SK-N-SH (cell line): ENCODE measurements at regions of chr14 and their contacts with region 1.

Region 1: GRCh38 chr14:101225450-101226152 is 322.1 kb upstream of the RTL1 start:
- DNase-seq: no peak
- H3K4me3 ChIP-seq: no peak overlapping the region
- H3K27ac ChIP-seq: peak overlapping the region in 1 of 2 experiments; percentile 97; a peak in 2 of 4 replicates
- H3K4me1 ChIP-seq: peaks cover 0 to 72% of the 10 kb centered on the region in 2 experiments; a peak in 1 of 4 replicates
- H3K27me3 ChIP-seq: no peaks in the 10 kb centered on the region
- CTCF ChIP-seq: no peak
- EP300 ChIP-seq: no peak
- RAD21 ChIP-seq: no peak

Region 2: GRCh38 chr14:100906420-100906819 is 319.2 kb before region 1 on chr14:
- CTCF ChIA-PET with region 1: interaction called, 11 read pairs
- POLR2A ChIA-PET with region 1: interaction called, 46 read pairs
- DNase-seq: peak; percentile 74
- H3K4me3 ChIP-seq: no peak overlapping the region; a peak in 2 of 4 replicates
- H3K27ac ChIP-seq: peak overlapping the region in 1 of 2 experiments; percentile 99; a peak in 2 of 4 replicates
- H3K4me1 ChIP-seq: peaks cover 0 to 53% of the 10 kb centered on the region in 2 experiments; a peak in 1 of 4 replicates
- H3K27me3 ChIP-seq: peaks cover 6% of the 10 kb centered on the region; the same call in 1 of the 2 replicates
- CTCF ChIP-seq: peak; percentile 30
- EP300 ChIP-seq: no peak
- RAD21 ChIP-seq: peak; percentile 78

Region 3: GRCh38 chr14:101128478-101129321 is 96.9 kb before region 1 on chr14:
- CTCF ChIA-PET with region 1: interaction called, 11 read pairs
- POLR2A ChIA-PET with region 1: interaction called, 26 read pairs
- DNase-seq: peak; percentile 20
- H3K4me3 ChIP-seq: no peak overlapping the region
- H3K27ac ChIP-seq: peak overlapping the region in 1 of 2 experiments; percentile 98; a peak in 2 of 4 replicates
- H3K4me1 ChIP-seq: peaks cover 0 to 83% of the 10 kb centered on the region in 2 experiments; a peak in 2 of 4 replicates
- H3K27me3 ChIP-seq: no peaks in the 10 kb centered on the region
- CTCF ChIP-seq: no peak
- EP300 ChIP-seq: no peak
- RAD21 ChIP-seq: no peak